ENCODE measurements at regions of chr11 and their contacts with region 1.

Region 1: GRCh38 chr11:95231127-95231880 is at the start of gene SESN3:
- DNase-seq: peak; percentile 89
- ATAC-seq: peak; percentile 97
- H3K4me3 ChIP-seq: peak within 1 kb of the TSS; percentile 47 to 73 (median 62)
- H3K27ac ChIP-seq: no peak within 1 kb of the TSS
- H3K4me1 ChIP-seq: peaks cover 29% of the 10 kb centered on the region
- H3K27me3 ChIP-seq: peaks cover 0 to 36% of the 10 kb centered on the region in 2 experiments; a peak in 3 of 5 replicates
- CTCF ChIP-seq: 0 out of 2 replicates have a peak, but pooled peaks have one; percentile 8
- EP300 ChIP-seq: peak in 1 of 2 experiments; percentile 9; a peak in 1 of 4 replicates
- POLR2A ChIP-seq: no peak
- RAD21 ChIP-seq: no peak
- total RNA-seq, gene SESN3: 0.86 and 1.9 TPM in 2 replicates

Region 2: DNA sequence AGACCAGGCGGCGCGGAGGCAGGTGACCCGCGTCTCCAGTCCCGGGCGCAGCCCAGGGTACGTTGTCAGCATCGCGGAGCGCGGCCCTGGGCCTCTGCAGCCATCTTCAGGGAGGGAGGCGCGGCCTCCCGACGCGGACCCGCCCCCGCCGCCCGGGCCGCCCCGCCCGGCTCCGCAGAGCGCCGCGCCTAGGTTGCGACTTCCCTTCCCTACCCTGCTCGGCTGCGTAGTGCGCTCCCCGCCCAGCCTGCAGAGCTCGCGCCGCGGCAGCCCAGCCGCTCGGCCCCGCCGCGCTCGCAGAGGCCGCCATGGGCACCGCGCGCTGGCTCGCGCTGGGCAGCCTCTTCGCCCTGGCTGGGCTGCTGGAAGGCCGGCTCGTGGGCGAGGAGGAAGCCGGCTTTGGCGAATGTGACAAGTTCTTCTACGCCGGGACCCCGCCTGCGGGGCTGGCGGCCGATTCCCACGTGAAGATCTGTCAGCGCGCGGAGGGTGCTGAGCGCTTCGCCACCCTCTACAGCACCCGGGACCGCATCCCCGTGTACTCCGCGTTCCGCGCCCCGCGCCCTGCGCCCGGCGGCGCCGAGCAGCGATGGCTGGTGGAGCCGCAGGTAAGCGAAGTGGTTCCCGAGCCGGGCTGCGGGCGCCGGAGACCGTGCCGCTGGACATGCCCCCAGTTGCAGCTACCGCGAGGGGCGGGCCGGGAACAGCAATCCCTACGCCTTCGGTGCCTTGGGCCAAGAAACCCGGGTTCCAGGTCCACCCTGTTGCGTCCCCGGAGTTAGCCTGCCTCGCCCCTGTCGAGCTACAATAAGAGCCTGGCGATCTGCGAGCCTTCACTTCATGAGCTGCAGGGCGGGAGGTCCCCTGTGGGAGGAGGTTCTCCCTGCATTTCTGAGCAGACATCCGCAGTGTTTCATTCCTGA is 141.4 kb before region 1 on chr11 and contains the start of gene ENDOD1:
- CTCF ChIA-PET with region 1: no interaction called
- POLR2A ChIA-PET with region 1: no interaction called
- in situ Hi-C with region 1: loop called (anchors 25 kb)
- intact Hi-C with region 1: no loop called
- DNase-seq: peak; percentile 57
- ATAC-seq: peak; percentile 95
- H3K4me3 ChIP-seq: peak within 1 kb of the TSS; percentile 84 to 86 (median 85)
- H3K27ac ChIP-seq: no peak within 1 kb of the TSS
- H3K4me1 ChIP-seq: peaks cover 44% of the 10 kb centered on the region
- H3K27me3 ChIP-seq: 0 out of 5 replicates have a peak, but pooled peaks cover 1 to 2% of the 10 kb centered on the region in 2 experiments
- CTCF ChIP-seq: 0 out of 2 replicates have a peak, but pooled peaks have one; percentile 7
- EP300 ChIP-seq: no peak
- POLR2A ChIP-seq: no peak; a peak in 1 of 4 replicates
- RAD21 ChIP-seq: no peak
- total RNA-seq, gene ENDOD1: 4.3 and 6.8 TPM in 2 replicates

Region 3: GRCh38 chr11:95212609-95213008 is 18.7 kb before region 1 on chr11:
- CTCF ChIA-PET with region 1: no interaction called
- POLR2A ChIA-PET with region 1: no interaction called
- in situ Hi-C with region 1: no loop called
- intact Hi-C with region 1: no loop called
- DNase-seq: no peak
- ATAC-seq: no peak
- H3K4me3 ChIP-seq: no peak overlapping the region
- H3K27ac ChIP-seq: no peak overlapping the region
- H3K4me1 ChIP-seq: no peaks in the 10 kb centered on the region
- H3K27me3 ChIP-seq: no peaks in the 10 kb centered on the region
- CTCF ChIP-seq: no peak
- EP300 ChIP-seq: no peak
- POLR2A ChIP-seq: no peak
- RAD21 ChIP-seq: no peak

Region 4: DNA sequence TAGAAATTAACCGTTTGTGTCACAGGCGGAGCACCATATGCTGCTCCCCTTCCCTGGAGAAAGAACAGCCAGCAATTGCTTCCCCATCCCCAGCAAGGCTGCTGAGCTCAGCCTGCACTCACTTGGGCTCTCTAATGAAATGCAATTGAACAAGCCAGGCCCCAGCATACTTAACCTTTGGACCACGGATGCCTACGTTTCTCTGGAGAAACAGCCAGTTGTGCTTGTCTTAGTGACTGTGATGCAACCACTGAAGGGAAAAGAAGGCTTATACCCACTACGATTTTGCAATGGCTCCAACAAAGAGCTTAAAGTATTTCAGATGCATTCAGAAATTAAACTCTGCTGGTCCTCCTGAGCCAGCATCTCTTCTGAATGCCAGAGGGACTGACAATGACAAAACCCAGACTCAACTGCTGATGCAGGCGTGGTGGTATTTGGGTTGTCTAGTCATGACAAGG is 51.0 kb after region 1 on chr11:
- CTCF ChIA-PET with region 1: no interaction called
- POLR2A ChIA-PET with region 1: no interaction called
- in situ Hi-C with region 1: no loop called
- intact Hi-C with region 1: loop called (anchors 2 kb)
- DNase-seq: peak; percentile 84
- ATAC-seq: peak; percentile 99
- H3K4me3 ChIP-seq: no peak overlapping the region
- H3K27ac ChIP-seq: no peak overlapping the region
- H3K4me1 ChIP-seq: peaks cover 17% of the 10 kb centered on the region
- H3K27me3 ChIP-seq: no peaks in the 10 kb centered on the region
- CTCF ChIP-seq: no peak
- EP300 ChIP-seq: peak in 1 of 2 experiments; percentile 28; a peak in 1 of 4 replicates
- POLR2A ChIP-seq: no peak
- RAD21 ChIP-seq: no peak

Region 5: GRCh38 chr11:95337175-95337957 is 106.1 kb after region 1 on chr11:
- CTCF ChIA-PET with region 1: no interaction called
- POLR2A ChIA-PET with region 1: no interaction called
- in situ Hi-C with region 1: no loop called
- intact Hi-C with region 1: no loop called
- DNase-seq: no peak
- ATAC-seq: no peak
- H3K4me3 ChIP-seq: no peak overlapping the region
- H3K27ac ChIP-seq: no peak overlapping the region
- H3K4me1 ChIP-seq: no peaks in the 10 kb centered on the region
- H3K27me3 ChIP-seq: no peaks in the 10 kb centered on the region
- CTCF ChIP-seq: no peak
- EP300 ChIP-seq: no peak
- POLR2A ChIP-seq: no peak
- RAD21 ChIP-seq: no peak

Region 6: DNA sequence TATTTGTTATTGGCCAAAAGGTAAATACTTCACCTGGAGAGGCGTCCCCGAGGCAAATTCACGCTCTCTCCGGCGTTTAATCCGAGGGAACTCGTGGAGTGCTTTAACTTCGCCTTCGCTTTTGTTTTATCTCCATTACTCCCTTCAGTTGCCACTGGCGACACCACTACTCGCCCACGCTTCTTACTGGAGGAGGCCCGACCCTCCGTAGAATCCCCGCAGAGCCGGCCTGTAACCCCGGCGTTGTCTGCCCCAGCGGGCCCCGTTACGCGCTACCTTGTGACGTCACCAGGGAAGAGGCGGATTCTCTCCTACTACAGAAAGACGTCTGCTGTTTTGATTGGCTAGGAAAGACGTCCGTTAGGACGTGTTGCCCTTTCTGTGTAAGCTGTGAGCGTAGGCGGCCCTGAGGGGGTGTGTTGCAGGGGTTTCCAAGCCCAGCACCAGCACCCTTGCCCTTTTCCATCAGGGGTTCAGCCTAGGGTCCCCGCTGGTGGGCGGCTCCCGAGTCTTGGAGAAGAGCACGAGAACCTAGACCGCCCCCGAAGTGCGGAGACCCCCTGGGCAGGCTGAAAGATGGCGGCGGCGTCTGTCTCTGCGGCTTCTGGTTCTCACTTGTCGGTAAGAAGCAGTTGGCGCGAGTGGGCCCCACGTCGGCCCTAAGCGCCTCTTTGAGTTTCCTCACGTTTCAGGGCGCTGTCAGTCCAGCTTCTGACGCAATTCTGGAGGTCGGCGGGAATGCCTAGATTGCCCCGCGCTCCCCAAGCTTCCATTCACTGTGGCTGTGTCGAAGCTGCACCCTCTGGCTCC is 559.0 kb after region 1 on chr11 and contains the start of gene CEP57:
- CTCF ChIA-PET with region 1: no interaction called
- POLR2A ChIA-PET with region 1: interaction called, 3 read pairs
- in situ Hi-C with region 1: no loop called
- intact Hi-C with region 1: loop called (anchors 2 kb)
- DNase-seq: peak; percentile 98
- ATAC-seq: peak; percentile 84
- H3K4me3 ChIP-seq: peak within 1 kb of the TSS; percentile 87 to 98 (median 97)
- H3K27ac ChIP-seq: peak within 1 kb of the TSS; percentile 98
- H3K4me1 ChIP-seq: peaks cover 54% of the 10 kb centered on the region
- H3K27me3 ChIP-seq: no peaks in the 10 kb centered on the region; a peak in 1 of 5 replicates
- CTCF ChIP-seq: no peak
- EP300 ChIP-seq: no peak; a peak in 1 of 4 replicates
- POLR2A ChIP-seq: peak; percentile 8 to 61; a peak in 3 of 4 replicates
- RAD21 ChIP-seq: peak; percentile 5; the same call in 1 of the 2 replicates
- total RNA-seq, gene CEP57: 59.4 and 85.6 TPM in 2 replicates

Measured in HepG2 (cell line).